ENCODE measurements at regions of chr18 and their contacts with region 1.

Region 1: DNA sequence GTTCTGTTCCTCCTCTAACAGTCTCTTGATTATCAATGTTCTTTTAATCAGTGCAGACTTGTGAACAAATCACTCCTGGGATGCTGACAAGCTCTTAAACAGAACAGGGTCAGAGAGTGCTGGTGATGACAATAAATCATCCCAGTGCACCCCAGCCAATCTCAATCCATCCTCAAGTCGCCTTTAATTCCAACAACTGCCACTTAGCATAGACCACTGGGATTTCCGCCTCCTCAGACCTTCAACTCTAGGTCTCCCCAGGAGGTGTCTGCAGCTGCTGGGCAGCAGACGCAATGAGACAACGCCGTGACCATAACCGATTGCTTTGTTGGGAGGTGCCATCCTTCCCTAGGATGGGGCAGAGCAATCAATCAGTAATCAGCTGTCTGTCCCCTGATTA is 184.2 kb upstream of the ACAA2 start:
- DNase-seq: no peak
- ATAC-seq: no peak
- H3K4me3 ChIP-seq: no peak overlapping the region
- H3K27ac ChIP-seq: no peak overlapping the region
- H3K4me1 ChIP-seq: no peaks in the 10 kb centered on the region
- H3K27me3 ChIP-seq: peaks cover 2% of the 10 kb centered on the region; the same call in 1 of the 2 replicates
- CTCF ChIP-seq: no peak
- POLR2A ChIP-seq: no peak
- RAD21 ChIP-seq: no peak

Region 2: DNA sequence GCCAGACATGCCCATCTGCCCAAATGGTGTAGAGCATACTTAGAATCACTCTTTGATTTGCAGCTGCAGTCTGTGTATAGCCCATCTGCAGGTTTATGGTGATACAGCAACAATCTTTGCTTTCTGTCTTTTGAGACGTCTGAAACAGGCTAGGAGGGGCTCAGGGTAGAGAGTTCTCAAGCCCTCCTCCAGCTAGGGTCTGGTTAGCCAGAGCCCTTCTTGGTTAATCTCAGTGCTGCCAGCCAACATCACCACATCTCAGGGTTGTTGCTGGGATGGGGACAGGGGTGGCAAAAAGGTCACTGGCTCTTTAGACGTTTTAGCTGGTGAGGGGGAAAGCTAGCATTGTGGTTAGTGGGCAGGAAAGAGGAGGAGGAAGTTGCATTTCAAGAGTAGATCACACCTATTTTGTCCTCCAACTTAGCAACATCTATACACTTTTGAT is 47.6 kb before region 1 on chr18:
- CTCF ChIA-PET with region 1: no interaction called
- POLR2A ChIA-PET with region 1: no interaction called
- dilution Hi-C with region 1: no loop called
- in situ Hi-C with region 1: no loop called
- intact Hi-C with region 1: no loop called
- DNase-seq: no peak
- ATAC-seq: no peak
- H3K4me3 ChIP-seq: no peak overlapping the region
- H3K27ac ChIP-seq: no peak overlapping the region
- H3K4me1 ChIP-seq: no peaks in the 10 kb centered on the region
- H3K27me3 ChIP-seq: peaks cover 2% of the 10 kb centered on the region; the same call in 1 of the 2 replicates
- CTCF ChIP-seq: no peak
- POLR2A ChIP-seq: no peak
- RAD21 ChIP-seq: no peak

Region 3: GRCh38 chr18:50051288-50051687 is 53.7 kb after region 1 on chr18:
- CTCF ChIA-PET with region 1: no interaction called
- POLR2A ChIA-PET with region 1: no interaction called
- dilution Hi-C with region 1: no loop called
- in situ Hi-C with region 1: no loop called
- intact Hi-C with region 1: loop called (anchors 10 kb)
- DNase-seq: no peak
- ATAC-seq: no peak
- H3K4me3 ChIP-seq: no peak overlapping the region
- H3K27ac ChIP-seq: no peak overlapping the region
- H3K4me1 ChIP-seq: no peaks in the 10 kb centered on the region
- H3K27me3 ChIP-seq: no peaks in the 10 kb centered on the region
- CTCF ChIP-seq: no peak
- POLR2A ChIP-seq: no peak
- RAD21 ChIP-seq: no peak